Heart right ventricle (tissue), 16 donors: ENCODE measurements at regions of chr10 and their contacts with region 1.

Region 1: GRCh38 chr10:34723750-34724149 is 91.3 kb downstream of the PARD3 start:
- DNase-seq: peak in 1 of 2 donors; percentile 67
- ATAC-seq: peak in 7 of 8 donors; percentile 70 to 87 (median 78)
- H3K4me3 ChIP-seq: peak overlapping the region in 1 of 10 donors; percentile 8
- H3K27ac ChIP-seq: peak overlapping the region in 1 of 10 donors; percentile 25
- H3K4me1 ChIP-seq: peaks cover 0 to 66% (median 37%) of the 10 kb centered on the region in 9 donors
- H3K27me3 ChIP-seq: no peaks in the 10 kb centered on the region
- CTCF ChIP-seq: peak; percentile 29 to 75 (median 56)

Region 2: DNA sequence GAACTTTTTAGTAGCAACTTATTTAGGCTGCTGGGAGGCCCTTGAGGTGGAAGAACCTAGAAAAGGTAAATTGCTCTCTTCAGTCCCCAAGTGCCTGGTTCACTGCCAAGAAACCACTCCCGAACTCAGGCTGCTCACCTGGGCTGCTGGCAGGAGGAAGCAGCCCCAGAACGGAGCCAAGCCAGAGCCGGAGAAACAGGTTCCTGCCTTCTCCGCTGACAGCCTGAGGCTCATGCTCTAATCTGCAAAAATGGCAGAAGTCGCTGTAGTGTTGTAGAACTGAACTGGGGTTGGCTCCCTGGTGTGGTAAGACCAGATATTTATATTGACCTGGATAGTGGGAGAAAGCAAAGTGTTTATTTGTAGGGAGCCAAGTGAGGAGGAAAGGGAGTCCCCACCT is 230.4 kb after region 1 on chr10:
- intact Hi-C with region 1: loop called in 3 of 10 experiments (anchors 5 to 10 kb)
- DNase-seq: no peak
- ATAC-seq: no peak
- H3K4me3 ChIP-seq: no peak overlapping the region
- H3K27ac ChIP-seq: no peak overlapping the region
- H3K4me1 ChIP-seq: peaks cover 0 to 10% (median 0%) of the 10 kb centered on the region in 9 donors
- H3K27me3 ChIP-seq: no peaks in the 10 kb centered on the region
- CTCF ChIP-seq: no peak

Region 3: GRCh38 chr10:34960983-34961382 is 237.2 kb after region 1 on chr10:
- intact Hi-C with region 1: loop called in 4 of 10 experiments (anchors 5 to 10 kb)
- DNase-seq: peak; percentile 22 to 48
- ATAC-seq: peak; percentile 78 to 95 (median 90)
- H3K4me3 ChIP-seq: no peak overlapping the region
- H3K27ac ChIP-seq: no peak overlapping the region
- H3K4me1 ChIP-seq: no peaks in the 10 kb centered on the region
- H3K27me3 ChIP-seq: no peaks in the 10 kb centered on the region
- CTCF ChIP-seq: peak in 8 of 9 donors; percentile 12 to 59 (median 45)

Region 4: GRCh38 chr10:35027567-35027966 is 303.8 kb after region 1 on chr10:
- intact Hi-C with region 1: loop called in 1 of 10 experiments (anchors 10 kb)
- DNase-seq: no peak
- ATAC-seq: no peak
- H3K4me3 ChIP-seq: no peak overlapping the region
- H3K27ac ChIP-seq: no peak overlapping the region
- H3K4me1 ChIP-seq: no peaks in the 10 kb centered on the region
- H3K27me3 ChIP-seq: no peaks in the 10 kb centered on the region
- CTCF ChIP-seq: peak in 7 of 9 donors; percentile 31 to 60 (median 47)